CD8-positive, alpha-beta memory T cell (primary cell): ENCODE measurements at regions of chr11 and their contacts with region 1.

Region 1: GRCh38 chr11:65615229-65615941 is at the start of gene PCNX3:
- DNase-seq: peak; percentile 100
- H3K4me3 ChIP-seq: peak within 1 kb of the TSS; percentile 93
- H3K4me3 Mint-ChIP-seq: peak within 1 kb of the TSS; percentile 89 to 99 (median 97)
- H3K27ac ChIP-seq: peak within 1 kb of the TSS; percentile 91
- H3K27ac Mint-ChIP-seq: peak within 1 kb of the TSS; percentile 88 to 100 (median 99)
- H3K4me1 ChIP-seq: peaks cover 44% of the 10 kb centered on the region
- H3K4me1 Mint-ChIP-seq: peaks cover 31 to 66% (median 37%) of the 10 kb centered on the region in 3 donors
- H3K27me3 ChIP-seq: no peaks in the 10 kb centered on the region
- H3K27me3 Mint-ChIP-seq: no peaks in the 10 kb centered on the region
- total RNA-seq, gene PCNX3: 46.4 to 53.1 TPM

Region 2: GRCh38 chr11:65497141-65498041 is 118.0 kb before region 1 on chr11:
- CTCF ChIA-PET with region 1: no interaction called
- POLR2A ChIA-PET with region 1: interaction called, 23 read pairs
- DNase-seq: peak; percentile 96 to 99 (median 97)
- H3K4me3 ChIP-seq: peak overlapping the region; percentile 97
- H3K4me3 Mint-ChIP-seq: no peak overlapping the region
- H3K27ac ChIP-seq: peak overlapping the region; percentile 95
- H3K27ac Mint-ChIP-seq: no peak overlapping the region
- H3K4me1 ChIP-seq: peaks cover 16% of the 10 kb centered on the region
- H3K4me1 Mint-ChIP-seq: peaks cover 13 to 30% (median 14%) of the 10 kb centered on the region in 3 donors
- H3K27me3 ChIP-seq: no peaks in the 10 kb centered on the region
- H3K27me3 Mint-ChIP-seq: peaks cover 0 to 3% of the 10 kb centered on the region in 2 donors

Region 3: GRCh38 chr11:65569973-65570918 is 45.1 kb before region 1 on chr11 and contains the start of gene ZNRD2:
- CTCF ChIA-PET with region 1: interaction called, 3 read pairs
- POLR2A ChIA-PET with region 1: interaction called, 15 read pairs
- DNase-seq: peak; percentile 97 to 99 (median 98)
- H3K4me3 ChIP-seq: peak within 1 kb of the TSS; percentile 95
- H3K4me3 Mint-ChIP-seq: peak within 1 kb of the TSS; percentile 98 to 99 (median 99)
- H3K27ac ChIP-seq: peak within 1 kb of the TSS; percentile 96
- H3K27ac Mint-ChIP-seq: peak within 1 kb of the TSS; percentile 96 to 100 (median 100)
- H3K4me1 ChIP-seq: peaks cover 76% of the 10 kb centered on the region
- H3K4me1 Mint-ChIP-seq: peaks cover 66 to 86% (median 83%) of the 10 kb centered on the region in 3 donors
- H3K27me3 ChIP-seq: no peaks in the 10 kb centered on the region
- H3K27me3 Mint-ChIP-seq: peaks cover 0 to 1% of the 10 kb centered on the region in 2 donors
- total RNA-seq, gene ZNRD2: 69.6 to 77.9 TPM

Region 4: GRCh38 chr11:65637794-65638317 is 22.5 kb after region 1 on chr11 and contains the start of gene SIPA1:
- CTCF ChIA-PET with region 1: interaction called, 3 read pairs
- POLR2A ChIA-PET with region 1: interaction called, 28 read pairs
- DNase-seq: peak; percentile 73 to 80 (median 77)
- H3K4me3 ChIP-seq: peak within 1 kb of the TSS; percentile 81
- H3K4me3 Mint-ChIP-seq: peak within 1 kb of the TSS; percentile 89 to 99 (median 97)
- H3K27ac ChIP-seq: peak within 1 kb of the TSS; percentile 98
- H3K27ac Mint-ChIP-seq: peak within 1 kb of the TSS; percentile 96 to 100 (median 100)
- H3K4me1 ChIP-seq: peaks cover 64% of the 10 kb centered on the region
- H3K4me1 Mint-ChIP-seq: peaks cover 39 to 61% (median 41%) of the 10 kb centered on the region in 3 donors
- H3K27me3 ChIP-seq: no peaks in the 10 kb centered on the region
- H3K27me3 Mint-ChIP-seq: peaks cover 0 to 3% of the 10 kb centered on the region in 2 donors
- total RNA-seq, gene SIPA1: 111 to 123 TPM

Region 5: GRCh38 chr11:65662799-65663638 is 47.6 kb after region 1 on chr11 and contains the start of gene RELA:
- CTCF ChIA-PET with region 1: interaction called, 9 read pairs
- POLR2A ChIA-PET with region 1: interaction called, 16 read pairs
- DNase-seq: peak; percentile 83 to 96 (median 88)
- H3K4me3 ChIP-seq: peak within 1 kb of the TSS; percentile 97
- H3K4me3 Mint-ChIP-seq: peak within 1 kb of the TSS; percentile 88 to 97 (median 90)
- H3K27ac ChIP-seq: peak within 1 kb of the TSS; percentile 97
- H3K27ac Mint-ChIP-seq: peak within 1 kb of the TSS; percentile 92 to 99 (median 98)
- H3K4me1 ChIP-seq: peaks cover 22% of the 10 kb centered on the region
- H3K4me1 Mint-ChIP-seq: peaks cover 30 to 50% (median 30%) of the 10 kb centered on the region in 3 donors
- H3K27me3 ChIP-seq: no peaks in the 10 kb centered on the region
- H3K27me3 Mint-ChIP-seq: no peaks in the 10 kb centered on the region
- total RNA-seq, gene RELA: 87.3 to 89.7 TPM

Region 6: DNA sequence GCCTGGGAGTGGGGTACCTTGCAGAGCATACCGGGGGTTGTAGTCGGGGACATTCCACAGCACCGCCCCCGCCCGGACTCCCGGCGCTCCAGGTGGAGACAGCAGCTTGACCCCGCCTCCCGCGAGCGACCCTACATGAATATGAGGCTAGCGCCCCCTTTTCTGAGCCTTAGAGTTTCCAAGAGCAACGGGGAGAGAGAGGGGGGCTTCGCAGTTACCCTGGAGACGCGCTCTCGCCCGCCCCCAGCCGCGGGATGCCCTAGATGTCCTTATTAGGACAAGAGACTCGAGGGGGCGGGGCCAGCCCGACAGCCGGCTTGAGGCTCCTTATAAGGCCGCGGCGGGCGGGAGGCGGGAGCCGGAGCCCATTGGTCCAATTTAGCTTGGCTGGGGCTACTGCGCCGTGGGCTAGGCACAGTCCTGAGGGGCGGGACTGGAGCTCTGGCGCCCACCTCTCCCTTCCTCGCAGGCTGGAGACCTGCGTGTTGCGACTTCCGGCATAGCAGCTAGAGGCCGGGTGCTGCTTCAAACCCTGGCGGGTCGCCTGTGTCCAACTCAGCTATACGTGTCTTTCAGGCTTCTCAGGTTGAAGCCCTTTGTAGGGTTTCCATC is 243.9 kb after region 1 on chr11:
- CTCF ChIA-PET with region 1: interaction called, 6 read pairs
- POLR2A ChIA-PET with region 1: interaction called, 11 read pairs
- DNase-seq: peak; percentile 94 to 99 (median 97)
- H3K4me3 ChIP-seq: peak overlapping the region; percentile 94
- H3K4me3 Mint-ChIP-seq: peak overlapping the region; percentile 90 to 96 (median 93)
- H3K27ac ChIP-seq: peak overlapping the region; percentile 93
- H3K27ac Mint-ChIP-seq: peak overlapping the region; percentile 88 to 98 (median 98)
- H3K4me1 ChIP-seq: peaks cover 52% of the 10 kb centered on the region
- H3K4me1 Mint-ChIP-seq: peaks cover 46 to 62% (median 55%) of the 10 kb centered on the region in 3 donors
- H3K27me3 ChIP-seq: no peaks in the 10 kb centered on the region
- H3K27me3 Mint-ChIP-seq: no peaks in the 10 kb centered on the region